HepG2 (cell line): ENCODE measurements at regions of chr4 and their contacts with region 1.

Region 1: GRCh38 chr4:107930821-107931774 is at the start of gene CYP2U1:
- DNase-seq: peak; percentile 68
- ATAC-seq: peak; percentile 99
- H3K4me3 ChIP-seq: peak within 1 kb of the TSS; percentile 57 to 82 (median 63)
- H3K27ac ChIP-seq: no peak within 1 kb of the TSS
- H3K4me1 ChIP-seq: peaks cover 22% of the 10 kb centered on the region
- H3K27me3 ChIP-seq: no peaks in the 10 kb centered on the region; a peak in 2 of 5 replicates
- CTCF ChIP-seq: no peak; the same call in 1 of the 2 replicates
- EP300 ChIP-seq: no peak
- POLR2A ChIP-seq: peak in 1 of 2 experiments; percentile 41; a peak in 1 of 4 replicates
- RAD21 ChIP-seq: peak; percentile 56; the same call in 1 of the 2 replicates
- total RNA-seq, gene CYP2U1: 1.9 and 3.4 TPM in 2 replicates

Region 2: GRCh38 chr4:107951551-107951950 is 20.5 kb after region 1 on chr4:
- CTCF ChIA-PET with region 1: no interaction called
- POLR2A ChIA-PET with region 1: no interaction called
- in situ Hi-C with region 1: no loop called
- intact Hi-C with region 1: no loop called
- DNase-seq: no peak
- ATAC-seq: no peak
- H3K4me3 ChIP-seq: no peak overlapping the region
- H3K27ac ChIP-seq: no peak overlapping the region
- H3K4me1 ChIP-seq: no peaks in the 10 kb centered on the region
- H3K27me3 ChIP-seq: no peaks in the 10 kb centered on the region
- CTCF ChIP-seq: no peak
- EP300 ChIP-seq: no peak
- POLR2A ChIP-seq: no peak
- RAD21 ChIP-seq: no peak

Region 3: DNA sequence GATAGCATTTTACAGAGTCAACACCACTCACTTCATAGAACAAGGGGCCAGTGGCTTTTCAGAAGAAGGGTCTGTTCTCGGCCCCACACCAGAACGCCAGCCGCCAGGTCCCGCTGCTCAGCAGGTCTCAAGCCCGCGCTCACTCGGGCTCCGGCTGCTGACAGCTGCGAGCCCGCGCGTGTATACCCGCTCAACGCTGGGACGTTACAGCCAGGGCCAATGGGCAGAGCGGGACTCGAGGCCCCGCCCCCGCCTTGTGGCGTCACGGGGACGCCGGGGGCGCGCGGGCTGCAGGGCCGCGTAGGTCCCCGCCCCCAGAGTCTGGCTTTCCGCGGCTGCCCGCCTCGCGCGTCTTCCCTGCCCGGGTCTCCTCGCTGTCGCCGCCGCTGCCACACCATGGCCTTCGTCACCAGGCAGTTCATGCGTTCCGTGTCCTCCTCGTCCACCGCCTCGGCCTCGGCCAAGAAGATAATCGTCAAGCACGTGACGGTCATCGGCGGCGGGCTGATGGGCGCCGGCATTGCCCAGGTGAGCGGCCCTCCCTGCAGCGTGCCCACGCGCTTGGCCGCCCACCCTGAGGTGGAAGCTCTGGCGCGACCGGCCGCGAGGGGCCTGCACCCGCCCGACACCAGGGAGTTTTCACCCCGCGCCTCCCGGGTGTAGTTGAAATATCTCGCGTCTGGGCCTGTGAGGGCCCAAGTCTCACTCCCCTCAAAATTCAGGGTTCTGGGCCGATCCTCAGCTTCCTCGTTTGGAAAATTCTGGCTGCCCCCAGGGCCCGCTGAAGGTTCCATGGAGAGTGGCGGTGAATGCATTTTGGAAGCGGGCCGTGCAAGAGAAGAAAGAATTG is 58.7 kb after region 1 on chr4 and contains the start of gene HADH:
- CTCF ChIA-PET with region 1: no interaction called
- POLR2A ChIA-PET with region 1: no interaction called
- in situ Hi-C with region 1: no loop called
- intact Hi-C with region 1: loop called (anchors 2 kb)
- DNase-seq: peak; percentile 80
- ATAC-seq: peak; percentile 96
- H3K4me3 ChIP-seq: peak within 1 kb of the TSS; percentile 83 to 98 (median 89)
- H3K27ac ChIP-seq: peak within 1 kb of the TSS; percentile 84
- H3K4me1 ChIP-seq: peaks cover 54% of the 10 kb centered on the region
- H3K27me3 ChIP-seq: no peaks in the 10 kb centered on the region
- CTCF ChIP-seq: 0 out of 2 replicates have a peak, but pooled peaks have one; percentile 8
- EP300 ChIP-seq: no peak
- POLR2A ChIP-seq: peak; percentile 83 to 84
- RAD21 ChIP-seq: peak; percentile 43; the same call in 1 of the 2 replicates
- total RNA-seq, gene HADH: 33.9 and 60.6 TPM in 2 replicates